HEK293 (cell line): ENCODE measurements at regions of chr3 and their contacts with region 1.

Region 1: DNA sequence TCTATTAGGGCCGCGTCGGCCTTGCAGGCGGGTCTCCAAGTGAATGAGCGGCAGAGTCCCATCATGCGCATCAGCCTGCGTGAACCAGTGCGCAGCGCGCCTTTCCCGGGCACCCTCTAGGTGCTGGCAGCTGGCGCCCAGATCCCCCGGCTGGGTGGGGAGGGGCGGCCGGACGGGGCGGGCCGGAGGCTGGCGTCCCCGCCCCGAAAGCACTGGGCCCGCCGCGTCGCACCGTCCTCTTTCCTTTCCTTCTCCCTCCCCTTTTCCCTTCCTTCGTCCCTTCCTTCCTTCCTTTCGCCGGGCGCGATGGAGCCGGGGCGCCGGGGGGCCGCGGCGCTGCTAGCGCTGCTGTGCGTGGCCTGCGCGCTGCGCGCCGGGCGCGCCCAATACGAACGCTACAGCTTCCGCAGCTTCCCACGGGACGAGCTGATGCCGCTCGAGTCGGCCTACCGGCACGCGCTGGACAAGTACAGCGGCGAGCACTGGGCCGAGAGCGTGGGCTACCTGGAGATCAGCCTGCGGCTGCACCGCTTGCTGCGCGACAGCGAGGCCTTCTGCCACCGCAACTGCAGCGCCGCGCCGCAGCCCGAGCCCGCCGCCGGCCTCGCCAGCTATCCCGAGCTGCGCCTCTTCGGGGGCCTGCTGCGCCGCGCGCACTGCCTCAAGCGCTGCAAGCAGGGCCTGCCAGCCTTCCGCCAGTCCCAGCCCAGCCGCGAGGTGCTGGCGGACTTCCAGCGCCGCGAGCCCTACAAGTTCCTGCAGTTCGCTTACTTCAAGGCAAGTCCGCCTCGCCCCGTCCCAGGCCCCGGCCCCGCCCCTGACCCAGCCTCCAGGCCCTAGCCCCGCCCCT is at the start of gene CRTAP:
- H3K4me3 ChIP-seq: peak within 1 kb of the TSS; percentile 78
- H3K27ac ChIP-seq: peak within 1 kb of the TSS; percentile 83
- H3K4me1 ChIP-seq: no peaks in the 10 kb centered on the region
- CTCF ChIP-seq: peak; percentile 31; the same call in 1 of the 2 replicates

Region 2: DNA sequence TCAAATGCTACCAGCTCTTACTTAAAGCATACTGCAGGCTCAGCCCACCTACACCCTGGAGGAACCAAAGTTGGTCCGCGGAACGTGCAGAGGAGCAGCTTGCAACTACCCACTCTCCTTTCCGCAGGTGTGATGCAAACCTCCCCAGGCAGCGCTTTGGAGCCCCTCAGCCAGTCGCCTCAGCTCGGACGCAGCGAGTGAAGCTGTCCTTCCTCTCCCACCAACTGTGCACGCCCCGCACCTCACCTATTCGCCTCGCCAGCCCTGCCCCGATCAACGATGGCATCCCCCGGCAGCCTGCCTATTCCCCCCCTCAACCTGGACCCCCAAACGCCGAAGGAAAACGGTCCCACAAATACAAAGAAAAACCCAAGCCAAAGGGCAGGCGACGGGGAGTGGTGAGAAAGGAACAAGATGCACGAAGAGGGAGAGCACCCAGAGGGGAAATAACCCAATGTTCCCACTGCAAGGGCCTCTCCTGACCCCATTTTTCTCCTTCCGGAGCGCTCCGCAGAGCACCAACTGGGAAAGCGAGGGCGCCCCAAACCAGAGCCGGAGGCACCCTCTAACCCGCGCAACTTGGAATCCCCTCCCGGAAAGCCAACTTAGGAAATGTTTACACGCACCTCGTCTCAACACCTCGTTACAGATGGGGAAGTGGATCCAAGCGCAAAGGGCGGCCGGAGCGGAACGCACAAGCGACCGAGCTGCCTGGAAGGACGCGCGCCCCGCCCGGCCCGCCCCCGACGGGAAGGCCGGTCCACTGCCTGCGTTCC is 17.7 kb before region 1 on chr3:
- CTCF ChIA-PET with region 1: no interaction called
- POLR2A ChIA-PET with region 1: interaction called, 17 read pairs
- H3K4me3 ChIP-seq: peak overlapping the region; percentile 88
- H3K27ac ChIP-seq: peak overlapping the region; percentile 65; the same call in 1 of the 2 replicates
- H3K4me1 ChIP-seq: no peaks in the 10 kb centered on the region
- CTCF ChIP-seq: no peak